ENCODE measurements at regions of chr6 and their contacts with region 1.

Region 1: DNA sequence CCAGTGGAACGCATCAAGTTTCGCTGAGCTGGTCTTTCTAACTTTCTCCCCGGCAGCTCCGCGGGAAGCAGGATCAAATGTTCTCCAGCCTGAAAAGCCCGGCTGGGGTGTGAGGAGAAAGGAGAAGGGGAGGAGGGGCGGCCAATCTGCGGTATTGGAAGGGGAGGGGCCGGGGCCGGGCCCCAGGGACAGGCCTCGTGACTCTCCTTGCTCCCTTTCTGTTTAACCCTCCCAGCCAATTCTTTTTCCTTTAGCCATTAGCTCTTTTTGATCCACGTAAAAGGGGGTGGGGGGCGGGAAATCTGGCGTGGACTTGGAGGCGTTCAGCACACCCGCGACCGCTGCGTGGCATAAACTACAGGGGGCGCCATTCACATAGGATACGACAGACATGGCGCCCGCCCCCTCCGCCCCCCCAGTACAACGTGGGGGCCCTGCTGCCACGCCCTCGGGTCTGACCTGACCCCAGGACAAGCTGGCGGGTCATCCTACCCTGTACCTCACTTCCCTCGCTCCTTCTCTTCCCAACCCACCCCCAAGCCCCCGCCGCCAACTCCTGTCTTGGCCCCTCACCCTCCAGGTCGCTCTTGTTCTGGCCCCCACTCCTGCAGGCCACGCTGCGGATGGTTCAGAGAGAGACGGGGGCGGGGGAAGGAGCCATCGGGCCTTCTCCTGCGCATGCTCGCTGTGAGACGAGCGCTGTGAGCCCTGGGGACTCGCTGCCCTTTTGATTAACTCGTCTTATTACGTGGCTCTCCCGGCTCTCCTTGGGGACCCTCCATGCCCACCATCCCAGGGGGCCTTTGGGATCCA is 7.8 kb upstream of the MDGA1 start:
- DNase-seq: peak; percentile 19 to 90
- H3K4me3 ChIP-seq: peak overlapping the region; percentile 51 to 58
- H3K27ac ChIP-seq: peak overlapping the region; percentile 68 to 83
- H3K4me1 ChIP-seq: peaks cover 0 to 3% of the 10 kb centered on the region in 2 donors
- H3K27me3 ChIP-seq: no peaks in the 10 kb centered on the region
- CTCF ChIP-seq: peak; percentile 61 to 81 (median 79)

Region 2: GRCh38 chr6:38012573-38012972 is 307.1 kb after region 1 on chr6:
- intact Hi-C with region 1: loop called (anchors 10 kb)
- DNase-seq: no peak
- H3K4me3 ChIP-seq: no peak overlapping the region
- H3K27ac ChIP-seq: no peak overlapping the region
- H3K4me1 ChIP-seq: peaks cover 0 to 7% of the 10 kb centered on the region in 2 donors
- H3K27me3 ChIP-seq: no peaks in the 10 kb centered on the region
- CTCF ChIP-seq: peak in 2 of 3 experiments; percentile 40 to 42

Region 3: GRCh38 chr6:38702558-38703397 is 997.3 kb after region 1 on chr6 and contains the start of gene GLO1:
- intact Hi-C with region 1: no loop called
- DNase-seq: peak; percentile 94 to 99
- H3K4me3 ChIP-seq: peak within 1 kb of the TSS; percentile 80 to 88
- H3K27ac ChIP-seq: peak within 1 kb of the TSS; percentile 90 to 91
- H3K4me1 ChIP-seq: no peaks in the 10 kb centered on the region
- H3K27me3 ChIP-seq: no peaks in the 10 kb centered on the region
- CTCF ChIP-seq: no peak
- total RNA-seq, gene GLO1: 32.6 TPM

Measured in ascending aorta (tissue), 2 donors.